ENCODE measurements at regions of chr7 and their contacts with region 1.

Region 1: GRCh38 chr7:17640730-17641377 is 299.4 kb downstream of the SNX13 start:
- H3K4me3 Mint-ChIP-seq: no peak overlapping the region
- H3K27ac Mint-ChIP-seq: no peak overlapping the region
- H3K4me1 Mint-ChIP-seq: peaks cover 10% of the 10 kb centered on the region
- H3K27me3 Mint-ChIP-seq: no peaks in the 10 kb centered on the region

Region 2: DNA sequence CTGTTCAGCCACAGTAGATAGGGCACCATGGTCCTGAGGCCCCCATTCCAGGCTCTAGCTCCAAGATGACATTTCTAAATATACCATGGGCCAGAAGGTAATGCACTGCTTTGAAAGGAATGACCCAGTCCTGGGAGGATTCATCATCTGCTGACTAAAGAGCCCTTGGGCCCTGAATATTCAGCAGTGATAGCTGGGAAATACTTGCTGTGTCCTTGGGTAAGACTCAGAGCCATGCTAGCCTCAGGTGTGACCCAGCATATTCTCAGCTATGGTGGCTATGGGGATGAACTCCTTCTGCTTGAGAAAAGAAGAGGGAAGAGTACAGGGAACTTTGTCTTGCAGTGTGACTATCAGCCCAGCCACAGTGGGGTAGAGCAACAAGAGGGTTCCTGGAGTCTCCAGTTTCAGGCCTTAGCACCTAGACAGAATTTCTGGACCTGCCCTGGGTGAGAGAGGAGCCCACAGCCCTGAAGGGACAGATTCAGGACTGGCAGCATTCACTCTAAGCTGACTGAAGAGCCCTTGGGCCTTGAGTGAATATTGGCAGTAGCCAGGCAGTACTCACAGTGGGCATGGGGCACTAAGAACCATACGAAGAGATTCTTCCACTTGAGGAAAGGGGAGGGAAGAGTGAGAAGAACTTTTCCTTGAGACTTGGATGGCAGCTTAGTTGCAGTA is 814.6 kb before region 1 on chr7:
- intact Hi-C with region 1: no loop called
- H3K4me3 Mint-ChIP-seq: no peak overlapping the region
- H3K27ac Mint-ChIP-seq: no peak overlapping the region
- H3K4me1 Mint-ChIP-seq: no peaks in the 10 kb centered on the region
- H3K27me3 Mint-ChIP-seq: no peaks in the 10 kb centered on the region

Region 3: DNA sequence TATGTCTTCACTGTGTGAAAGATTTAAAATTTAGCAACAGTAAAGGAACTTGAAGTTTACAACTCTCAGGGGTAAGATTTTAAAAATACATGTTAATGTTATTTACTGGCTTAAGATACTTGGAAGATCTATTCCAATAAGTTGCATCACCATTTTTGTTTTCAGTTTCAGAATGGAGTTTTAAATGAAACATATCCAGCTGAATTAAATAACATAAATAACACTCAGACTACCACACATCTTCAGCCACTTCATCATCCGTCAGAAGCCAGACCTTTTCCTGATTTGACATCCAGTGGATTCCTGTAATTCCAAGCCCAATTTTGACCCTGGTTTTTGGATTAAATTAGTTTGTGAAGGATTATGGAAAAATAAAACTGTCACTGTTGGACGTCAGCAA is 298.1 kb before region 1 on chr7:
- intact Hi-C with region 1: loop called (anchors 10 kb)
- H3K4me3 Mint-ChIP-seq: no peak overlapping the region
- H3K27ac Mint-ChIP-seq: no peak overlapping the region
- H3K4me1 Mint-ChIP-seq: peaks cover 21% of the 10 kb centered on the region
- H3K27me3 Mint-ChIP-seq: no peaks in the 10 kb centered on the region